ENCODE measurements at regions of chr1 and their contacts with region 1.

Region 1: GRCh38 chr1:179094823-179095222 is 13.0 kb downstream of the TOR3A start:
- DNase-seq: no peak

Region 2: GRCh38 chr1:179744401-179745130 is 649.7 kb after region 1 on chr1:
- intact Hi-C with region 1: loop called in 1 of 2 experiments (anchors 5 kb)
- DNase-seq: no peak

Measured in posterior vena cava (tissue), 2 donors.